Natural killer cell (primary cell): ENCODE measurements at regions of chr6 and their contacts with region 1.

Region 1: DNA sequence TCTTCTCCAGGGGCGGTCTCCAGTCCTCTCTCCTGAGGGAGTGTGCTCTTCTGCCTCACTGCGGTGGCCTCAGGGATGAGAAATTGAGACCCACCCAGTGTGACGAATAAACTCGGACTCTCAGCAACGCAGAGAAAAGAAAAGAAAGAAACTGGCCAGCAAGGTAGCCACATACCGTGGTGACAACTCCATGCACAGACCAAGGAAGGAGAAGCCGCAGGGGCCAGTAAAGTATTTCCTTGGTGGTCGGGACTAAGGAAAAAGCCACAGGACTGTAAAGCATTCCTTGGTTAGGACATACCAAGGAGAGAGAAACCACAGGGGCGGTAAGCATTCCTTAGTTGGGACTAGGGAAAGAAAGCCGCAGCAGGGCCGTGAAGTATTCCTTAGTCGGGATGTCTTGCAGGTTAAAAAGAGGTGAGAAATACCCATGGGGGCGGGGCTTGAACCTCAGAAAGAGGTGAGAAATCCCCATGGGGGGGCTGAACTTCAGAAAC is 13.6 kb upstream of the GOPC start:
- DNase-seq: no peak
- ATAC-seq: no peak
- H3K4me3 ChIP-seq: no peak overlapping the region
- H3K4me3 Mint-ChIP-seq: peak overlapping the region; percentile 64
- H3K27ac ChIP-seq: peak overlapping the region; percentile 81
- H3K27ac Mint-ChIP-seq: peak overlapping the region; percentile 93 to 95
- H3K4me1 ChIP-seq: peaks cover 29% of the 10 kb centered on the region
- H3K4me1 Mint-ChIP-seq: peaks cover 60 to 65% of the 10 kb centered on the region in 2 donors
- H3K27me3 ChIP-seq: no peaks in the 10 kb centered on the region
- H3K27me3 Mint-ChIP-seq: no peaks in the 10 kb centered on the region
- CTCF ChIP-seq: no peak

Region 2: DNA sequence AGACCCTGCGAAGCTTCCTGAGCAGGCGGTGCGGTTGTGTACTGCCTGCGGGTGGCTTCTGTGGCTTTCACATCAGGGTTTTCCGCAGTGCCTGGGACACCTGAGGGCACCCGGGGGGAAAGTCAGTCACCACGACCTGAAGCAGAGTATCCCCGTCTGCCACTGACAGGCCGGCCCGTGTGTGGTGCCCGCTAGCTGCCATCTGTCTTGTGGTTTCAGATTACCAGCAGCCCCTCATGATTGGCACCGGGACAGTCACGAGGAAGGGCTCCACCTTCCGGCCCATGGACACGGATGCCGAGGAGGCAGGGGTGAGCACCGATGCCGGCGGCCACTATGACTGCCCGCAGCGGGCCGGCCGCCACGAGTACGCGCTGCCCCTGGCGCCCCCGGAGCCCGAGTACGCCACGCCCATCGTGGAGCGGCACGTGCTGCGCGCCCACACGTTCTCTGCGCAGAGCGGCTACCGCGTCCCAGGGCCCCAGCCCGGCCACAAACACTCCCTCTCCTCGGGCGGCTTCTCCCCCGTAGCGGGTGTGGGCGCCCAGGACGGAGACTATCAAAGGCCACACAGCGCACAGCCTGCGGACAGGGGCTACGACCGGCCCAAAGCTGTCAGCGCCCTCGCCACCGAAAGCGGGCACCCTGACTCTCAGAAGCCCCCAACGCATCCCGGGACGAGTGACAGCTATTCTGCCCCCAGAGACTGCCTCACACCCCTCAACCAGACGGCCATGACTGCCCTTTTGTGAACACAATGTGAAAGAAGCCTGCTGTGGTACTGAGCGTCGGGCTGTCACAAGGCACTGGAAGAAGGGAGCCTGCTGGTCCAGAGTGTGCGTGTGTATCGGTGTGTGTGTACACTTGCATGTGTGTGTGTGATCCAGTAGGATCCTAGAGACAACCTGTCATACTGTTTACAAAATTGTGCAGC is 68.0 kb before region 1 on chr6:
- intact Hi-C with region 1: loop called (anchors 1 kb)
- DNase-seq: peak; percentile 54 to 67
- ATAC-seq: peak; percentile 45 to 65 (median 48)
- H3K4me3 ChIP-seq: peak overlapping the region; percentile 52
- H3K4me3 Mint-ChIP-seq: peak overlapping the region; percentile 88
- H3K27ac ChIP-seq: peak overlapping the region; percentile 72
- H3K27ac Mint-ChIP-seq: peak overlapping the region; percentile 91 to 92
- H3K4me1 ChIP-seq: peaks cover 28% of the 10 kb centered on the region
- H3K4me1 Mint-ChIP-seq: peaks cover 47 to 49% of the 10 kb centered on the region in 2 donors
- H3K27me3 ChIP-seq: no peaks in the 10 kb centered on the region
- H3K27me3 Mint-ChIP-seq: no peaks in the 10 kb centered on the region
- CTCF ChIP-seq: no peak

Region 3: DNA sequence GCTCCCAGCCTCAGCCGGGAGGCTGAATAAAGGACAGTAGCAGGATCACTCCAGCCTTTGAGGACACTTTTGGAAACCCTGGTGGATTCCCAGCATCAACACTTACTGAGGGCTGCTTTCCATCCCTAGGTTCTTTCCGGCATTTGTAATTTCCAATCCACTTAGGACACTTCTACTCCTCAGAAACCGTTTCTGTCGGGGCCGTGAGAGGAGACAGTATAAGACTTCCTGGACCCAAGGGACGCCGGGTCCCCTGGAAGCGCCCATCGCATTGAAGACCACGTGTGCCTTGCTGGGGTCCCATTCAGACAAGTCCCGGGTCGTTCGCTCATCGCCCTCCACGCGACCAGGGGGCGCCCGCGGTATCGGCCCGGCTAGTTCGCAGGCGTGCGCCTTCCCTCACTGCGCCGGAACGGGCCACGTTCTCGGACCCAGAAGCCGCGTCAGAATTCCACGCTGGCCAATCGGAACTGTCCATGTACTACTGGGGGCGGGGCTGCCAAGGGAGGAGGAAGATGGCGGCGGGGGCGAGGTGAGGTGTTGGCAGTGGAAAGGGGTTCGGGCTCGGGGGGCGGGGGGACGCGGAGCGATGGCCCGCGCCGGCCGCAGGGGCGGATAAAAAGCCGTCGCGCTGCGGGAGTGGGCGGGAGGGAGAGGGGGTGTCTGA is 59.2 kb after region 1 on chr6 and contains the start of gene NUS1:
- intact Hi-C with region 1: loop called (anchors 2 kb)
- DNase-seq: peak; percentile 94 to 99
- ATAC-seq: peak; percentile 96 to 99 (median 96)
- H3K4me3 ChIP-seq: peak within 1 kb of the TSS; percentile 69
- H3K4me3 Mint-ChIP-seq: peak within 1 kb of the TSS; percentile 91
- H3K27ac ChIP-seq: peak within 1 kb of the TSS; percentile 59
- H3K27ac Mint-ChIP-seq: peak within 1 kb of the TSS; percentile 52 to 92
- H3K4me1 ChIP-seq: peaks cover 17% of the 10 kb centered on the region
- H3K4me1 Mint-ChIP-seq: peaks cover 40 to 54% of the 10 kb centered on the region in 2 donors
- H3K27me3 ChIP-seq: no peaks in the 10 kb centered on the region
- H3K27me3 Mint-ChIP-seq: no peaks in the 10 kb centered on the region
- CTCF ChIP-seq: peak; percentile 71
- total RNA-seq, gene NUS1: 16.9 to 25.9 (median 23.4) TPM

Region 4: DNA sequence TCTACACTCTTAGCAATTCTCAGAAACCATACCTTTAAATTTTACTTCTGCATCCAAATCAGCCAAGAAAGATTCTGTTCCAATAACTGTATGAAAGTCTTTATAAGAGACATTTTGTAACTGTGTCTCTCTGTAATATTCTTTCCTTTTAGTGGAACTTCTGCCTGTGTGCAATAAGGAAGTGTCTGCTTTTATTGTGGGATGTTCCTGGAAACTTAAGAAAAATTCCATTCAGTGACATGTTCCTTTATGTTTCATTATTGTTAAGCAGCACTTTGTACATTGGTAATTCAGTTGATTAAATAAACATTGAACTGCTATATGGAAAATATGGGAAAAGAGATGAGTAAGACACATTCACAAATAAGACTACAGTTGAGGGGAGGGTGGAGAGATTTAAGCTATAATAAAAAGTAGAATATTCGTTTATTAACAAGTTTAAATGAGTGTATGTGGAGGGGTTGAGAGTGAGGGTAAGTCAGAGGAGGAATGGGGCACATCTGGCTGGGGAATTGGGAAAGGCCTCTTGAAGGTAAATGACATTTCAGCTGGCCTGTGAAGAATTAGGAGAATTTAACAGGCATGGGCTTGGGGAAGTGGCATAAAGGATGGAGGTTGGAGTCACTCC is 71.2 kb after region 1 on chr6:
- intact Hi-C with region 1: no loop called
- DNase-seq: no peak
- ATAC-seq: no peak
- H3K4me3 ChIP-seq: no peak overlapping the region
- H3K4me3 Mint-ChIP-seq: no peak overlapping the region
- H3K27ac ChIP-seq: no peak overlapping the region
- H3K27ac Mint-ChIP-seq: no peak overlapping the region
- H3K4me1 ChIP-seq: peaks cover 4% of the 10 kb centered on the region
- H3K4me1 Mint-ChIP-seq: peaks cover 58 to 60% of the 10 kb centered on the region in 2 donors
- H3K27me3 ChIP-seq: no peaks in the 10 kb centered on the region
- H3K27me3 Mint-ChIP-seq: no peaks in the 10 kb centered on the region
- CTCF ChIP-seq: no peak

Region 5: GRCh38 chr6:117711369-117711768 is 95.4 kb after region 1 on chr6:
- intact Hi-C with region 1: no loop called
- DNase-seq: peak in 1 of 2 donors; percentile 36
- ATAC-seq: no peak
- H3K4me3 ChIP-seq: no peak overlapping the region
- H3K4me3 Mint-ChIP-seq: no peak overlapping the region
- H3K27ac ChIP-seq: no peak overlapping the region
- H3K27ac Mint-ChIP-seq: no peak overlapping the region
- H3K4me1 ChIP-seq: no peaks in the 10 kb centered on the region
- H3K4me1 Mint-ChIP-seq: peaks cover 0 to 6% of the 10 kb centered on the region in 2 donors
- H3K27me3 ChIP-seq: no peaks in the 10 kb centered on the region
- H3K27me3 Mint-ChIP-seq: no peaks in the 10 kb centered on the region
- CTCF ChIP-seq: no peak

Region 6: GRCh38 chr6:118810420-118811027 is 1194.6 kb after region 1 on chr6:
- intact Hi-C with region 1: loop called (anchors 10 kb)
- DNase-seq: peak; percentile 65 to 84
- ATAC-seq: peak; percentile 83 to 94 (median 86)
- H3K4me3 ChIP-seq: no peak overlapping the region
- H3K4me3 Mint-ChIP-seq: peak overlapping the region; percentile 90
- H3K27ac ChIP-seq: peak overlapping the region; percentile 92
- H3K27ac Mint-ChIP-seq: peak overlapping the region; percentile 96 to 99
- H3K4me1 ChIP-seq: peaks cover 22% of the 10 kb centered on the region
- H3K4me1 Mint-ChIP-seq: peaks cover 54 to 65% of the 10 kb centered on the region in 2 donors
- H3K27me3 ChIP-seq: no peaks in the 10 kb centered on the region
- H3K27me3 Mint-ChIP-seq: no peaks in the 10 kb centered on the region
- CTCF ChIP-seq: no peak